ENCODE measurements at regions of chr14 and their contacts with region 1.

Region 1: DNA sequence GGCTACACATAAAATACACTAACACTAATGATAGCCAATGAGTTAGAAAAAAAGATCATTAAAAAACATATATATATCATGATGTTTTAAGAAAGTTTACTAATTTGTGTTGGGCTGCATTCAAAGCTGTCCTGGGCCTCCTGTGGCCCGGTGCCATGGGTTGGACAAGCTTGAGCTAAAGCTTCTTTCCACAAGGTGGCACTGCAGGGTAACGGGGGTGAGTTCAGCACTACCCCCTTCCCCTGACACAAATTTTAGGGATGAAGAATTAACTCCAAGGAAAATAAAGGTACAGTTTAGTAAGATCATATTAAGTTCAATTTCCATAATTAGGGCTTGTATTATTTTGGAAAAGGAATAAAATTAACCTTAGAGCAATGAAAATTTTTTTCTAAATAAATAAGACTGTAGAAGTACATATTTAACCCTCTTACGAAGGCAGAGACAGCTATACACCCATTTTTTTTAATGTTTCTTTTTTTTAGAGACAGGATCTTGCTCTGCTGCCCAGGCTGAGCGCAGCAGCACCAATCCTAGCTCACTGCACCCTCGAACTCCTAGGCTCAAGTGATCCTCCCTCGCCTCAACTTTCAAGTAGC is 38.9 kb downstream of the PPP1R13B start:
- DNase-seq: peak; percentile 40 to 61
- ATAC-seq: peak; percentile 75 to 96
- H3K4me3 ChIP-seq: no peak overlapping the region
- H3K27ac ChIP-seq: no peak overlapping the region
- H3K4me1 ChIP-seq: peaks cover 0 to 5% of the 10 kb centered on the region in 2 donors
- H3K27me3 ChIP-seq: no peaks in the 10 kb centered on the region
- CTCF ChIP-seq: peak; percentile 76 to 95 (median 88)
- POLR2A ChIP-seq: no peak

Region 2: DNA sequence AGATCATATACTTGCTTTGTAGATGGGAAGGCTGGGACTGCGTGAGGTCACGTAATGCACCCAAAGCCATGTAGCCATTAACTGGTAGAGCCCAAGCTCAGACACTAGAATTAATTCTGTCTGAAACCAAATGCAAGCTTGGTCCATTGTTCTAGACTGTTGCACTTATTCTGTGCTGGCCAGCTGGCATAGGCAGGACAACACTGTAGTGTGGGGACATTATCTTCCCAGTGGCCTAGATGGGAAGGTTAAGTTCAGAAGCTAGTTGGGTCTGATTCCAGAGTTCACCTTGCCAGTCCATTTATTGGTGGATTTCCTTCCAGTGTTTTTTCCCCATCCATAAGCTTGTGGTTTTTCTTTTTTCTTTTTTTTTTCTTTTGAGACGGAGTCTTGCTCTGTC is 140.4 kb before region 1 on chr14:
- in situ Hi-C with region 1: no loop called
- intact Hi-C with region 1: no loop called
- DNase-seq: no peak
- ATAC-seq: no peak
- H3K4me3 ChIP-seq: no peak overlapping the region
- H3K27ac ChIP-seq: no peak overlapping the region
- H3K4me1 ChIP-seq: no peaks in the 10 kb centered on the region
- H3K27me3 ChIP-seq: no peaks in the 10 kb centered on the region
- CTCF ChIP-seq: no peak
- POLR2A ChIP-seq: no peak

Region 3: GRCh38 chr14:103847451-103848188 is 39.1 kb after region 1 on chr14 and contains the start of gene PPP1R13B:
- in situ Hi-C with region 1: no loop called
- intact Hi-C with region 1: loop called (anchors 2 kb)
- DNase-seq: peak; percentile 88 to 89
- ATAC-seq: peak; percentile 88 to 90
- H3K4me3 ChIP-seq: peak within 1 kb of the TSS; percentile 60 to 86 (median 76)
- H3K27ac ChIP-seq: peak within 1 kb of the TSS; percentile 73 to 87 (median 84)
- H3K4me1 ChIP-seq: peaks cover 12 to 14% of the 10 kb centered on the region in 2 donors
- H3K27me3 ChIP-seq: no peaks in the 10 kb centered on the region
- CTCF ChIP-seq: peak in 2 of 5 experiments; percentile 10 to 24
- POLR2A ChIP-seq: peak; percentile 80 to 85
- total RNA-seq, gene PPP1R13B: 10.4 to 24.6 (median 11.8) TPM

Region 4: DNA sequence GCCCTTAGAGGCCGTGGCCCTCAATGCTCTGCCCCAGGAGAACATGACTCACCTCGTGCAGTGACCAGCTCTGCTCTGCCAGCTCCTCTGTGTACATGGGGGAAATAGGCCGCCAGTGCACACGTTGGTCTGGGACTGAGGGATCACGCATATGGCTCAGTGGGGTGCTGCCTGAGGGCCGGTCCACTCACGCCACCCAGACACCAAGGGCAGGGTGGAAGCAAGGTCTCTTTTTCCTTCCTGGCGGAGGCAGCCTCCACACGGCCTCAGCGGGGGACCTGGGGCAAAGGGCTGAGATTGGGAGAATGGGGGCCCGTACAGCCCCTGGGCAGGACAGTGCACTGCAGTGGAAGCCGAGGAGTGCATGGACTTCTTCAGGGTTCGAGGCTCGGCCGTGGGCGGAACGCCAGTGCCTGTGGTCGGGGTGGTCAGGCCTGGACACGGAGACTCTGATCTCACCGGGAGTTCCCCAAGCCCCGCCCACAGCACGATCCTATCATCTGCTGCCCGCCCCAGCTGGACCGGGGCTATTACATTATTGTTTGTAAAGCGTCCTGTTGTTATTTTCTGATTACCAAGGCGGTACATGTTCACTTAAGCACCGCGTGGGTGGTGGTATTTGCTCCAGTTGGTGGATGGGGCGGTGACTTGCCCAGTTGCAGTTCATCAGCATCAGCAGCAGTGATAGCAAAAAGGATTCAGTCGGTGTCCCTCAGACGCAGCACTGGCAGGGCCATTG is 81.0 kb after region 1 on chr14:
- in situ Hi-C with region 1: no loop called
- intact Hi-C with region 1: no loop called
- DNase-seq: no peak
- ATAC-seq: no peak
- H3K4me3 ChIP-seq: no peak overlapping the region
- H3K27ac ChIP-seq: no peak overlapping the region
- H3K4me1 ChIP-seq: peaks cover 0 to 3% of the 10 kb centered on the region in 2 donors
- H3K27me3 ChIP-seq: no peaks in the 10 kb centered on the region
- CTCF ChIP-seq: no peak
- POLR2A ChIP-seq: no peak

Region 5: DNA sequence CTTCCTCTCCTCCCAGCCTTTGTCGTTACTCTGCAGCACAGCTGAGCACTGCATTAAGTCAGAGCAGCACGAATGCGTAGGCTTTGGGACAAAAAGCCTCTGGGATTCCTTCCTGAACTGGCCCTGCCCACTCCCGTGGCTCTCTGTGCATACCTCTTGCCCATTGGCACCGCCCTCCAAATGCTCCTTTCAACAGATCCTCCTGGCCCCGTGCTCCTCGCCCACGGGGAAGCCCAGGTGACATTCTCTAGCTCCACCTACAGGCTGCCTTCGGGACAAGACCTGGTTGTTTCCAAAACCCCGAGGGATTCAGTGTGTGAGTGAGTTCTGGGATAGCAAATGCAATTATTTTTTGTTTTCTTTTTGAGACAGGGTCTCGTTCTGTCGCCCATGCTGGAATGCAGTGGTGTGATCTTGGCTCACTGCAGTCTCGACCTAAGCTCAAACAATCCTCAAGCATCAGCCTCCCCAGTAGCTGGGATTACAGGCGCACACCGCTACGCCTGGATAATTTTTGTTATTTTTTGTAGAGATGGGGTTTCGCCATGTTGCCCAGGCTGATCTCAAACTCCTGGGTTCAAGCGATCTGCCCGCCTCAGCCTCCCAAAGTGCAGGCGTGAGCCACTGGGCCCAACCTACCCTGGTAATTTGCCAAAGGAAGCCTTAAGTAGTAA is 101.9 kb after region 1 on chr14:
- in situ Hi-C with region 1: loop called (anchors 5 kb)
- intact Hi-C with region 1: loop called (anchors 1 kb)
- DNase-seq: peak; percentile 38 to 74
- ATAC-seq: peak; percentile 82 to 96
- H3K4me3 ChIP-seq: no peak overlapping the region
- H3K27ac ChIP-seq: no peak overlapping the region
- H3K4me1 ChIP-seq: peaks cover 7 to 9% of the 10 kb centered on the region in 2 donors
- H3K27me3 ChIP-seq: no peaks in the 10 kb centered on the region
- CTCF ChIP-seq: peak; percentile 63 to 82 (median 76)
- POLR2A ChIP-seq: no peak

Region 6: DNA sequence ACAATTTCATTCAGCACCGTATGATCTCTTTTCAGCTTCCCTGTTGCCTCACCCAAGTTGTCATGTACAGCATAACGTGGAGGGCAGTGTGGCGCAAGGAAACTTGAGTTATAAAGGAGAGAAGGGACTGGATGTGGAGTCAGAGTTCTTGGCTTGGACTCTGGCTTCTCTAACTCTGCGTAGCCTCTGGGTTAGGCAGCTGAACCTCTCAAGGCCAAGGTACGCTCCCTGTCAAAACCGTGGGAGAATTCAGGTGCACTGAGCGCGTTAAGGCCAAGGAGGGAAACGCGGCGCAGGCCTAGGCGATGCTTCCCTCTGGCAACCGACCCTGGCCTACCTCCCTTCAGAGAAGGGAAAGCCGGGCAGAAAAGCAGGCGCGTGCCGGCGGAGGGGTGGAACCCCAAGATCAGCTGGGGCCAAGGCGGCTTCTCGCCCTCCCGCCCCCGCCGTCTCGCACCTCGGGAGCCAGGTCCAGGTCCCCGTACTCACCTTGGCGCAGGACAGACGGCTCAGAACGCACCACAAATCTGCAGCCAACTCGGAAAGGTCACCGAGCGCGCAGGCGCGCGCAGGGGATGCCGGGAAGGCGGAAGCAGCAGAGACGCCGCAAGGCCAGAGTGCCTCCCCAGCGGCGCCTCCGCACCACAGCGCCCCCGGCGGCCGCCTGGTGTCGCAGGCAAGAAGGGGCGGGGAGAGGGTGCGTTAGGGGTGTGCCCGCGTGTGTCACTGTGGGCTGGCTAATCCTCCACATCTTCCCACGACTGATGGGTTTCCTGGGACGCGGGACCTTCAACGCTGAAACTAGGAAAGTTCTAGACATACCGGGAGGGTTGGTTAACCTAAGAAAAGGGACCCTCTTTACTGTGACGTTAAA is 112.7 kb after region 1 on chr14:
- in situ Hi-C with region 1: loop called in 2 of 4 experiments (anchors 5 kb)
- intact Hi-C with region 1: loop called (anchors 1 kb)
- DNase-seq: peak; percentile 80 to 91
- ATAC-seq: peak; percentile 98 to 99
- H3K4me3 ChIP-seq: peak overlapping the region; percentile 75 to 98 (median 88)
- H3K27ac ChIP-seq: peak overlapping the region; percentile 83 to 93 (median 90)
- H3K4me1 ChIP-seq: peaks cover 19 to 23% of the 10 kb centered on the region in 2 donors
- H3K27me3 ChIP-seq: peaks cover 0 to 5% (median 0%) of the 10 kb centered on the region in 3 donors
- CTCF ChIP-seq: peak; percentile 92 to 99 (median 94)
- POLR2A ChIP-seq: peak; percentile 43 to 70

Region 7: DNA sequence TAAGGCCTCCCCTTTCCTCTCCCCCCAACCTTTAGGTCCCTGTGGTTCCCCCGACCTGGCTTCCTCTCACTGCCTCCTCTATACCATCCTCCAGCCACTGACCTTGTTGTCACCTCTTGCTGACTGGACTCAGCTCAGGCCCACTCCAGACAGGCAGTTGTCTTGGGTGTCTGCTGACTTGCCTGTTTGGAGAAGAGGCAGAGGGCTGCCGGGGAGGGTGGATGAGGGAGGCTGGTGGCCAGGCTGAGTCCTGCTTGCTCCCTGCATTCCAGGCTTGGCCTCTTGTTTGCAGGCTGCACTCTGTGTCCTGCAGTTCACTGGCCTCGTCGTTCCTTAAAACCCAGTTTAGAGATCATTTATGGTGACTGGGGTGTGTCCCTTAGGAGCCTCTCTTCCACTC is 164.9 kb after region 1 on chr14:
- in situ Hi-C with region 1: loop called in 1 of 4 experiments (anchors 5 kb)
- intact Hi-C with region 1: no loop called
- DNase-seq: no peak
- ATAC-seq: no peak
- H3K4me3 ChIP-seq: no peak overlapping the region
- H3K27ac ChIP-seq: no peak overlapping the region
- H3K4me1 ChIP-seq: no peaks in the 10 kb centered on the region
- H3K27me3 ChIP-seq: no peaks in the 10 kb centered on the region
- CTCF ChIP-seq: no peak
- POLR2A ChIP-seq: no peak

Region 8: GRCh38 chr14:103989964-103990363 is 181.5 kb after region 1 on chr14:
- in situ Hi-C with region 1: loop called in 1 of 4 experiments (anchors 10 kb)
- intact Hi-C with region 1: no loop called
- DNase-seq: no peak
- ATAC-seq: no peak
- H3K4me3 ChIP-seq: no peak overlapping the region
- H3K27ac ChIP-seq: no peak overlapping the region
- H3K4me1 ChIP-seq: no peaks in the 10 kb centered on the region
- H3K27me3 ChIP-seq: peaks cover 0 to 10% (median 0%) of the 10 kb centered on the region in 3 donors
- CTCF ChIP-seq: no peak
- POLR2A ChIP-seq: no peak

Measured in gastrocnemius medialis (tissue), 4 donors.